ENCODE measurements at regions of chr18 and their contacts with region 1.

Region 1: GRCh38 chr18:31555971-31556747 is 35.5 kb upstream of the TTR start:
- DNase-seq: peak; percentile 31 to 37
- H3K4me3 ChIP-seq: no peak overlapping the region
- H3K27ac ChIP-seq: no peak overlapping the region
- H3K4me1 ChIP-seq: no peaks in the 10 kb centered on the region
- H3K27me3 ChIP-seq: no peaks in the 10 kb centered on the region
- CTCF ChIP-seq: peak; percentile 82

Region 2: DNA sequence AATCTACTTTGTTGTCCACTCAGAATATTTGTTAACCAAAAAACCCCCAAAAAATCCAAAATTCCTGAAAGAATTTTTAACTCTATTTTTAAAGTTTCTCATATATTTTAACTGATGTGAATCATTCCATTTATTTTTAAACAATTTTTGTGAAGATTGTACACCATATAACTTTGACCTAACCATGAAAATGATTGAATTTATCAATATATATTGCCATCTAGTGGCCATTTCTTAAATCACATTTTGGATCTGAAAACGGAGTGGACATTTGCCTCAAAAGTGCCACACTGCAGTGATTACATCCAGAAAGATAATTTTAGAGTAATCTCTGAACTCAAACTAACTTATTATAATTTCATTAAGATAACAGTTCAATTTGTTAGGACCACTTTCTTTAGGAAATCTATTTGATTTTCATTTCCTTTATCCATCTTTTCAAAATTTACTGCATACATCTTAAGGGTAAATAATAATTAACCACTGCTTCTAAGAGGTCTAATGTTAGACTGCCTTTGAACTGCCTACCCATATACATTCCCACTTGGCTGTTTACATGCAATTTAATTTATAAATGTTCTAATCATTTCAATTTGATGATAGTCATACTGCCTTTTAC is 584.7 kb before region 1 on chr18:
- CTCF ChIA-PET with region 1: no interaction called
- POLR2A ChIA-PET with region 1: no interaction called
- intact Hi-C with region 1: loop called (anchors 2 kb)
- DNase-seq: no peak
- H3K4me3 ChIP-seq: no peak overlapping the region
- H3K27ac ChIP-seq: no peak overlapping the region
- H3K4me1 ChIP-seq: 0 out of 2 replicates have a peak, but pooled peaks cover 4% of the 10 kb centered on the region
- H3K27me3 ChIP-seq: no peaks in the 10 kb centered on the region
- CTCF ChIP-seq: peak; percentile 65

Region 3: GRCh38 chr18:31424383-31424988 is 131.7 kb before region 1 on chr18:
- CTCF ChIA-PET with region 1: no interaction called
- POLR2A ChIA-PET with region 1: no interaction called
- intact Hi-C with region 1: loop called (anchors 2 kb)
- DNase-seq: peak in 1 of 2 experiments; percentile 46
- H3K4me3 ChIP-seq: no peak overlapping the region
- H3K27ac ChIP-seq: no peak overlapping the region
- H3K4me1 ChIP-seq: no peaks in the 10 kb centered on the region
- H3K27me3 ChIP-seq: no peaks in the 10 kb centered on the region
- CTCF ChIP-seq: peak; percentile 89

Region 4: DNA sequence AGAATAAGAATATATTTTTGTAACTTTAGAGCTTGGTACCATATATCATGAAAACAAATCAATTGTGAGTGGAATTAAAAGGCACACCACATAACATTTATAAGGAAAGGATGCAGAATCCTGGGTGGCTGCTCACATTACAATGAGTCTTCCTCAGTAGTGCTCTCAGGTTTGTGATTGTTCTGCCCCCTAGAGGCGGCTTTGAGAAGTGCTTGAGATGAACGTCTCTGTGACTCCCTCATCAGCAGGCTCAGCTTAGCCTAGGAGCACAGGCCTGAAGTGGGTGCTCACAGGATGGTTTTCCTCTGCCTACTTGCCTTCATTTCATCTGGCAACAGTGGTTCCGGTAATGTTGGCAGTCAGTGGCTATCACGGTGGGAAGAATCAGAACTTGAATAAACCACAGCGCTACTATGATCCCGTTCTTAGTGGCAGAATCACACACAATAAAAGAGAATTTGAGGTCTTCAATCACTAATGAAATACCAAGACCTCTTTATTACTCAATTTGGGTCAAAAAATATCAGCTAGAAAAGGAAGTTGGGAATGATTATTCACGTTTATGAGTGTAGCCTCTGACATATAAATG is 166.3 kb after region 1 on chr18:
- CTCF ChIA-PET with region 1: interaction called, 4 read pairs
- POLR2A ChIA-PET with region 1: no interaction called
- intact Hi-C with region 1: loop called (anchors 1 kb)
- DNase-seq: peak in 1 of 2 experiments; percentile 55
- H3K4me3 ChIP-seq: no peak overlapping the region
- H3K27ac ChIP-seq: no peak overlapping the region
- H3K4me1 ChIP-seq: no peaks in the 10 kb centered on the region
- H3K27me3 ChIP-seq: no peaks in the 10 kb centered on the region
- CTCF ChIP-seq: peak; percentile 81

Region 5: DNA sequence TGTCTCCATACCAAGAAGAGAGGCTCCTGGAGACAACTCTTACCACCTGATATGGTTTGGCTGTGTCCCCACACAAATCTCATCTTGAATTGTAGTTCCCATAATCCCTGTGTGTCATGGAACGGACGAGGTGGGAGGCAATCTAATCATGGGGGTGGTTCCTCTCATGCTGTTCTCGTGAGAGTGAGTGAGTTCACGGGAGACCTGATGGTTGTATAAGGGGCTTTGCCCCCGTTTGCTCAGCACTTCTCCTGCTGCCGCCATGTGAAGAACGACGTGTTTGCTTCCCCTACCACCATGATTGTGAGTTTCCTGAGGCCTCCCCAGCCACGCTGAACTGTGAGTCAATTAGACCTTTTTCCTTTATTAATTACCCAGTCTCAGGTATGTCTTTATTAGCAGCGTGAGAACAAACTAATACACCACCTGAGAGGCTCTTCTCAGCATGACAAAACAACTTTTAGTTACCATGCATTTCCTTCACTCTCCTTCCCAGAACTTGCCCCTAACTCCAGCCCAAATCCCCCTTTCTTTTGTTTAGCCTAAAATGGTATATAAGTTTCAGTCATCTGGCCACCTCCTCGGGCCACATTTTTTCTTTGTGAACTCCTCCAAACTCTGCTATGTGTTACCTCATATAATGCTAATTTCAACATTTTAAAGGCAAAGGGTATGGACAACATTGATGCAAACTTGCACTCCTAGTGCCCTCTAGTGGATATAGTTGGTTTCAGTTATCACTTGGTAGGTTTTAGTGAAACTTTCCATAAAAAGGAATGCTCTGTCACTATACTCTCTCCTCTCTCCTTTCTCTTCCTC is 263.2 kb after region 1 on chr18:
- CTCF ChIA-PET with region 1: interaction called, 3 read pairs
- POLR2A ChIA-PET with region 1: no interaction called
- intact Hi-C with region 1: loop called (anchors 2 kb)
- DNase-seq: peak; percentile 1 to 42
- H3K4me3 ChIP-seq: no peak overlapping the region
- H3K27ac ChIP-seq: no peak overlapping the region
- H3K4me1 ChIP-seq: no peaks in the 10 kb centered on the region
- H3K27me3 ChIP-seq: no peaks in the 10 kb centered on the region
- CTCF ChIP-seq: peak; percentile 73

Region 6: DNA sequence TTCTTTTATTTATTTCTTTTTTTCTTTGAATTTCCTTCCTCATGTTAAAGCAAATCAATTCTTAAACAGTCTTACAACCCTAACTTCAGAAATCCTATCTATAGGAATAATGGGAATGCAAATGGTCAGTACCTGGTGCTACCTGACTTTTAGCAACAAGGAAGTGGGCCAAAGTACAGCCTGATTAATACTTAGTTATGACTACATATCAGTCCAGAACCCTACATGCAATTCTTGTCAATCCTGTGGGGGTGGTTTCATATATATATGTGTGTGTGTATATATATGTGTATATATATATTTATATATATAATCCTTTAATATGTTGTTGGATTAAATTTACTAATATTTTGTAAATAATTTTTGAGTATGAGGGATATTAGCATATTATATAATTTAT is 401.6 kb after region 1 on chr18:
- CTCF ChIA-PET with region 1: no interaction called
- POLR2A ChIA-PET with region 1: no interaction called
- intact Hi-C with region 1: loop called (anchors 5 kb)
- DNase-seq: no peak
- H3K4me3 ChIP-seq: no peak overlapping the region
- H3K27ac ChIP-seq: no peak overlapping the region
- H3K4me1 ChIP-seq: no peaks in the 10 kb centered on the region
- H3K27me3 ChIP-seq: no peaks in the 10 kb centered on the region
- CTCF ChIP-seq: no peak

Region 7: DNA sequence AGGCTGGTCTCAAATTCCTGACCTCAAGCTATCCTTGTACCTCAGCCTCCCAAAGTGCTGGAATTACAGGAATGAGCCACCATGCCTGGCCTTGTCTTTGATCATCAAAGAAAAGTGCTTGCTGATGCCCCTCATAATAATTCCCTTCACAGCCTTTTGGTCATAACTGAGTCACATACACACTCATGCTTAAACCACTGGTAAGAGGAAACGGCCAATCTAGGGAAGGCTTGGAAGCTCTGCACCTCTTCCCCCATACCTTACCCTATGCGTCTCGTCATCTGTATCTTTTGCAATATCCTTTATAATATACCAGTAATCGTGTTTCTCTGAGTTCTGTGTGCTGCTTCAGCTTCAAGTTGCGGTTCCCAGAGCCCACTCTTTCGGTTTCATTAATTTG is 530.7 kb after region 1 on chr18:
- CTCF ChIA-PET with region 1: no interaction called
- POLR2A ChIA-PET with region 1: no interaction called
- intact Hi-C with region 1: no loop called
- DNase-seq: no peak
- H3K4me3 ChIP-seq: no peak overlapping the region
- H3K27ac ChIP-seq: no peak overlapping the region
- H3K4me1 ChIP-seq: peaks cover 5% of the 10 kb centered on the region; the same call in 1 of the 2 replicates
- H3K27me3 ChIP-seq: no peaks in the 10 kb centered on the region
- CTCF ChIP-seq: no peak

Measured in PC-9 (cell line).